Activated naive CD4-positive, alpha-beta T cell treated with anti-CD3 and anti-CD28 coated beads, Interleukin-2, amount 10 ng/mL, durations not matched to agents 7 days and 5 days (primary cell): ENCODE measurements at regions of chr20 and their contacts with region 1.

Region 1: GRCh38 chr20:815914-816606 is 17.5 kb upstream of the FAM110A start:
- DNase-seq: peak; percentile 77
- H3K4me3 Mint-ChIP-seq: no peak overlapping the region
- H3K27ac Mint-ChIP-seq: no peak overlapping the region
- H3K4me1 Mint-ChIP-seq: peaks cover 6% of the 10 kb centered on the region
- H3K27me3 Mint-ChIP-seq: peaks cover 32% of the 10 kb centered on the region

Region 2: DNA sequence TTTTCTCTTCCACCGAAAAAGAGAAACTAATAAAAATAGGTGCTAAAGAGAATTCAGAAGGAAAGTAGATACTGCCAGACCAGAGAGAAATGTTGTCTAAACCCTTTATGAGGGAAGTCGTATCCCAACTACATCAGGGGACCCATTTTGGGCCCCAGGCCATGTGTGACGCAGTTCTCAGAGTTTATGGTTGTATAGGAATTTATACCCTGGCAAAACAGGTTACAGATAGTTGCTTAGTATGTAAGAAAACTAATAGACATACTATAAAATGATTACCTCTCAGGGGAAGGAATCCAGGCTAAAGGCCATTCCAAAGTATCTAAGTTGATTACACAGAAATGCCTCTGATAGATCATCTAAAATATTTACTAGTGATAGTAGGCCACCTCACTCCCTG is 19.1 kb before region 1 on chr20:
- CTCF ChIA-PET with region 1: no interaction called
- DNase-seq: no peak
- H3K4me3 Mint-ChIP-seq: no peak overlapping the region
- H3K27ac Mint-ChIP-seq: no peak overlapping the region
- H3K4me1 Mint-ChIP-seq: no peaks in the 10 kb centered on the region
- H3K27me3 Mint-ChIP-seq: peaks cover 10% of the 10 kb centered on the region

Region 3: DNA sequence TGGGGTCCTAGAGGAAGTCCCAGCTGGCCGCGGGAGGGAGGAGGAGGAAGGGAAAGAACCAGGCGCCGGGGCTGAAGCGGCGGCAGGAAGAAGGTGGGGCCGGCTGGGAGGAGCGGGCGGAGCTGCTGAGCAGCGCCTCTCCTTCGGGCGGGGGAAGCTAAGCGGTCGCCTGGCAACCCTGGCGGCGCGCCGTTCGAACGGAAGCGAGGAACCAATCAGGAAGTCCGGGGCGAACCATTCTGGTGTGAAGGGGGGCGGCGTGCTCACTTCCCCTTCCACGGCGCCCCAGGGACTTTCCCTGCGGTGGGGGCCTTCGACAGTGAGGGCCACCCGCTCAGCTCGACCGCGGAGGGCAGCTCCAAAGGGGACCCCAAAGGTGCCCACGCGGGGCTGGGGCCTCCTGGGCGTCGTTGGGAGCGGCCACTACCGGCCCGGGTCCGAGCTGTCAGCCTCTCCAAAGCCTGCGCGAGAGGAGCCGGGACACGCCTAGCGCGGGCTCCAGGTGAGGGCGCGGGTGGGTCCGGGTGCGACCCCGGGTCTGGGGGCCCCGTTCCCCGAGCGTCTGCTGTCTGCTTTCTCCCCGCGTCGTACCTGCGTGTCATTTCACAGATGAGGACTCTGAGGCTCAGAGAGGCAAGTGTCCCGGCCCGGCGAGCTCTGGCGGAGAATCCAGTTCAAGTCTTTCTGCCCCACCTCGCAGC is 17.5 kb after region 1 on chr20 and contains the start of gene FAM110A:
- CTCF ChIA-PET with region 1: interaction called, 12 read pairs
- DNase-seq: peak; percentile 98
- H3K4me3 Mint-ChIP-seq: peak within 1 kb of the TSS; percentile 92
- H3K27ac Mint-ChIP-seq: peak within 1 kb of the TSS; percentile 80
- H3K4me1 Mint-ChIP-seq: peaks cover 44% of the 10 kb centered on the region
- H3K27me3 Mint-ChIP-seq: peaks cover 5% of the 10 kb centered on the region

Region 4: GRCh38 chr20:956330-956951 is 140.4 kb after region 1 on chr20:
- CTCF ChIA-PET with region 1: interaction called, 206 read pairs
- DNase-seq: peak; percentile 80
- H3K4me3 Mint-ChIP-seq: no peak overlapping the region
- H3K27ac Mint-ChIP-seq: no peak overlapping the region
- H3K4me1 Mint-ChIP-seq: no peaks in the 10 kb centered on the region
- H3K27me3 Mint-ChIP-seq: peaks cover 69% of the 10 kb centered on the region